ENCODE measurements at regions of chr4 and their contacts with region 1.

Region 1: DNA sequence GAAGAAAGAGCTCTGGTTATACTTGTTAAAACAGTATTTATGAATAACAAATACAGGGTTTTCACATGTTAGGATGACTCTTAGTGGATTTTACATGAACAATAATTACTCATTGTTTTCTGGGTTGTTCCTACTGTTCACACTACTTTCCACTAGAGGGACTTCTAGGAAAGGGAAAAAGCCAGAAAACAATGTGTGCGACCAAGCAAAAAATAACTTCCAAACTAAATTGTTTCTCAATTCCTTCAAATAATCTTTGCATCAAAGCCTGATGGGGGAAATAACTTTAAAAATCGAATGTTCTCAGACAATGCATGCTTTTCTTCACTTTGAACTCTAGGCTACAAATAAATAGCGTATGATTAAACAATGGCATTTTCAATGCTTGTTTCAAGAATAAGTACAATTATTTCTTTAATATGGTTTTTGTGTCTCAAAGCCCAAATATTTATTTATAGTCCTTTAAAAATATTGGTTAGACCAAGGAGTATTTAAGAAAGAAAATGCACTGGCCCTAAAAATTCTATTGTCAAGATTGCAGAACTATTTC is 72.1 kb upstream of the ETNPPL start:
- DNase-seq: no peak
- ATAC-seq: peak in 3 of 4 donors; percentile 42 to 68 (median 46)
- H3K4me3 ChIP-seq: no peak overlapping the region
- H3K27ac ChIP-seq: no peak overlapping the region
- H3K4me1 ChIP-seq: peaks cover 20% of the 10 kb centered on the region
- H3K27me3 ChIP-seq: no peaks in the 10 kb centered on the region
- CTCF ChIP-seq: peak; percentile 68

Region 2: GRCh38 chr4:108751321-108751720 is 83.6 kb before region 1 on chr4:
- intact Hi-C with region 1: no loop called
- DNase-seq: no peak
- ATAC-seq: no peak
- H3K4me3 ChIP-seq: no peak overlapping the region
- H3K27ac ChIP-seq: no peak overlapping the region
- H3K4me1 ChIP-seq: no peaks in the 10 kb centered on the region
- H3K27me3 ChIP-seq: no peaks in the 10 kb centered on the region
- CTCF ChIP-seq: no peak

Region 3: DNA sequence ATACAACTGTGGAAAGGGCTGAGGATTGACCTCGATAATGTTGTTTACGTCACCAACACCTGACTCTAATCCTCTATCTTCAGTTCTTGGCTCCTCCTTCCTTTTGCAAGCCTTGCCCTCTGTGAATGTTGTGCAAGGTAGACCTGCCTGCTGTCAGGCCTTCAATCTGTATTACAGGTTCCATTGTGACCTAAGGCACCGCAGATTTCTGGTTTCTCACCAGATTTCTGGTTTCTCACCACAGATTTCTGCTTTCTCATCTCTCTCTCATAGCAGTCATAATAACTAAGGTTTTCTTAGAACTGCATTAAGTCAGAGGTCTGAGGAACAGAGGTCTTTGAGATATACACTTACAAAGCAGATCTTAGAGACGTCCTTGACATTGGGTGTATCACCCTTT is 20.6 kb before region 1 on chr4:
- intact Hi-C with region 1: no loop called
- DNase-seq: no peak
- ATAC-seq: no peak
- H3K4me3 ChIP-seq: no peak overlapping the region
- H3K27ac ChIP-seq: no peak overlapping the region
- H3K4me1 ChIP-seq: no peaks in the 10 kb centered on the region
- H3K27me3 ChIP-seq: no peaks in the 10 kb centered on the region
- CTCF ChIP-seq: no peak

Region 4: DNA sequence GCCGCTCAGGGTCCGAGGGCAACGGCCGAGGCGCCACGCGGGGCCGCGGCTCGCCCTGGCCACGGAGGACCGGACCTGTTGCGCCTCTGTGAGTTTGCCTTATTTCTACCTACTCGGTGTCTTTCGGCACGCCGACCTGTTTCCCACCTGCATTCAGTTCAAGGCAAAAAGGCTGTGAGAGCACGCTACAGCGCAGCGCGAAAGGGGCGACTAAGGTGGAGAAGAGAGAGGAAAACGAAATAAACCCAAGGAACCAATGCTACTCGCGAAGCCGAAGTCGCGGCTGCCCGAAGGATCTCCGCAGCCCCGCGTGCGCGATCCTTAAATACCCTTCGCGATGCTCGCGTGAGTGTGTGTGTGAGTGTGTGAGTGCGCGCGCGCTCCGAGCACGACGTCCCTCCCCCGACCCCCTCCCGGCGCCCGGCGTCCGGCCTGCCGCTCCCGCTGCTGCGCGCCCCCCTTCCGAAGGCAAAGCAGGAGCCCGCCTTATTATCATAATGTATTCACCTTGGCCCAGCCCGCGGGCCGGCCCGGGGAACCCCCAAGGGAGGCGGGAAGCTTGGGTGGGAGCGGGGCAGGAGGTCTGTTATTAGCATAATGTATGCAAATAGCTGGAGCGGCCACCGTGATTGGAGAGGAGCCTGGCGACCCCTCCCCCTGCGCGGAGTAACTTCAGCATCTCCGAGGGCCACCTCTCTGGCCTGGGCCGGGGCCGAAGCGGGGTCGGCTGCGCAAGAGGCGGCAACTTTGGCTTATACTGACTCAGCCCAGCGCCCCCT is 467.6 kb after region 1 on chr4 and contains the start of gene COL25A1:
- intact Hi-C with region 1: loop called (anchors 10 kb)
- DNase-seq: peak; percentile 32 to 59
- ATAC-seq: peak; percentile 44 to 81 (median 53)
- H3K4me3 ChIP-seq: peak within 1 kb of the TSS; percentile 73
- H3K27ac ChIP-seq: no peak within 1 kb of the TSS
- H3K4me1 ChIP-seq: no peaks in the 10 kb centered on the region
- H3K27me3 ChIP-seq: peaks cover 0 to 21% (median 0%) of the 10 kb centered on the region in 3 donors
- CTCF ChIP-seq: no peak
- total RNA-seq, gene COL25A1: 0.14 to 0.52 (median 0.36) TPM